Activated CD4-positive, alpha-beta T cell treated with anti-CD3 and anti-CD28 coated beads for 36 hours (primary cell): ENCODE measurements at regions of chr1 and their contacts with region 1.

Region 1: DNA sequence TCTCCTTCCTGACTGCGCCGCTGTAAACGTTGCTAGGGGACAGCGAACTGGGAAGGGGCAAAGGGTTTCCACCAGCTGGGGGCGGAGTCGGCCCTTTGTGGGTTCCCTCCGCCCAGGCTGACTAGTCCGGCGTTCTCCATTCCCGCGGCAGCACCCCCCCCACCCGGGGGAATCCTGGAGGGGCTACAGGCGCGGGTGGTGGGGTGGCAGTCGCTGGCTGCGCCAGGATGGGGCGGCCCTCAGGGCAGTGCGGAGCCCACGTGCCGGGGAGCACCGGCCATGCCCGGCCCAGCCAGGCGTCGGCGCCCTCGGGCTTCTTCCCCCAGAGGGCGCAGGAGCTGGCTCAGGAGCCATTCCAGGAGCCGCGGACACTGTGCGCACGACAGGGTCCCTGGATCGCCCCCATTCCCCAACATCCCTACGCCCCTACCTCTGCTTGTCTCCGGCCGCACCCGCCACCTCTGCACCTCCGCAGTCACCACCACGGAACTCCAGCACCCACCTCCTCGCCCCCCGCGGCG is 476 bp downstream of the BATF3 start:
- DNase-seq: peak; percentile 82
- ATAC-seq: peak; percentile 68
- H3K4me3 Mint-ChIP-seq: peak overlapping the region; percentile 77
- H3K27ac Mint-ChIP-seq: peak overlapping the region; percentile 88
- H3K4me1 Mint-ChIP-seq: peaks cover 57% of the 10 kb centered on the region
- H3K27me3 Mint-ChIP-seq: peaks cover 5% of the 10 kb centered on the region

Region 2: DNA sequence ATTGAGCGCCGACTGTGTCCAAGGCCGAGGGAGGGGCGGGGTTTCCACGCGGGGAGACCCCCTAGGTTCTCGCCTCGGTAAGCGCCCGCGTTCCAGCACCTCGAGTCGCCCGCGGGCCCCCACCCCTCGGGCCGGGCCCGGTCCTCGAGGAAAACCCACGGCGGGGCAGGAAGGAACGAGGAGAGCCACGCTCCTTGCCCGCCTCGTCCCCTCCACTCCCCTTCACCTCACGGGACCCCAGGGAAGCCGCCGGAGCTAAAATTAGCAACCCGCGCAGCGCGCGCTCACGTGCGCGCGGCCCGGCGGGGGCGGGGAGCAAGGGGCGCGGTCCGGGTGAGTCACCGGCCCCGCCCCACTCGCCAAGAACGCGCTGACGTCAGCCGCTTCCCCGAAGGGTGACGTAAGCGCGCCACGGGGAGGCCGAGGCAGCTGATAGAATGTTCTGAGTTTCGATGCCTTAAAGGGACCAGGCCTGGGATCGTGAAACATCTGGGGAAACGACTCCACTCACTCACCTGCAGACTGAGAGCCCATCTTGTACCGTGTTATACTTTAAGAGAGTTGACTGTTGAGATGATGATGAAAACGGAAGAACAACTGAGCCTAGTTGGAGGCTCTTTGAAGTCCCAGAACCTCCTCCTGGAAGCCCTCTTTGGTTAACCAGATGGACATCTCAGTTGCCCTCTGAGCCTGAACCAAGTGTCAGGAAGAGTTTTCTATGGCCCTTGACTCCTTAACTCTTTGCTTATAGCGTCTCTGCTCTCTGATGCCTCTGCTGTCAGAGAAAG is 140.3 kb before region 1 on chr1:
- CTCF ChIA-PET with region 1: no interaction called
- POLR2A ChIA-PET with region 1: no interaction called
- intact Hi-C with region 1: loop called in 1 of 2 experiments (anchors 2 kb)
- DNase-seq: peak; percentile 95
- ATAC-seq: peak; percentile 90
- H3K4me3 Mint-ChIP-seq: peak overlapping the region; percentile 61
- H3K27ac Mint-ChIP-seq: peak overlapping the region; percentile 95
- H3K4me1 Mint-ChIP-seq: peaks cover 19% of the 10 kb centered on the region
- H3K27me3 Mint-ChIP-seq: peaks cover 14% of the 10 kb centered on the region

Region 3: DNA sequence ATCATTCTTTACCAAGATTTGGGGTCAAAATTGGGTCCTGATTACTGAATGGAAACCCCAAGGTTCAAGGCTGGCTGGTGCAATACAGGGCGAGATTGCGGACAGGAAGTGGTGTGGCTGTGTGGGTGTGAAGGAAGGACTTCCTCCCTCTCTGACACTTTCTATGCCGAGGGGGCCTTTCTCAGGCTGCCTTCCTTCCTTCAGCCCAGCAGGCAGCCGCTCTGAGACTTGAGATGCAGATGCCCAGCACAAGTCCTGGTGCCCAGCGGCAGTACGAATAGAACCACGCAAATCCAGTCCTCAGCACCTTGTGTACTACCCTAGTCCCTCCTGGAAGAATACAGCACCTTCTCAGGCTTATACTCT is 15.8 kb before region 1 on chr1:
- CTCF ChIA-PET with region 1: interaction called, 11 read pairs
- POLR2A ChIA-PET with region 1: interaction called, 5 read pairs
- intact Hi-C with region 1: no loop called
- DNase-seq: peak; percentile 82
- ATAC-seq: peak; percentile 37
- H3K4me3 Mint-ChIP-seq: peak overlapping the region; percentile 39
- H3K27ac Mint-ChIP-seq: peak overlapping the region; percentile 83
- H3K4me1 Mint-ChIP-seq: peaks cover 50% of the 10 kb centered on the region
- H3K27me3 Mint-ChIP-seq: no peaks in the 10 kb centered on the region

Region 4: GRCh38 chr1:212738330-212738729 is 39.2 kb after region 1 on chr1:
- CTCF ChIA-PET with region 1: interaction called, 6 read pairs
- POLR2A ChIA-PET with region 1: no interaction called
- intact Hi-C with region 1: loop called in 1 of 2 experiments (anchors 5 kb)
- DNase-seq: no peak
- ATAC-seq: peak; percentile 81
- H3K4me3 Mint-ChIP-seq: no peak overlapping the region
- H3K27ac Mint-ChIP-seq: peak overlapping the region; percentile 85
- H3K4me1 Mint-ChIP-seq: peaks cover 36% of the 10 kb centered on the region
- H3K27me3 Mint-ChIP-seq: no peaks in the 10 kb centered on the region

Region 5: DNA sequence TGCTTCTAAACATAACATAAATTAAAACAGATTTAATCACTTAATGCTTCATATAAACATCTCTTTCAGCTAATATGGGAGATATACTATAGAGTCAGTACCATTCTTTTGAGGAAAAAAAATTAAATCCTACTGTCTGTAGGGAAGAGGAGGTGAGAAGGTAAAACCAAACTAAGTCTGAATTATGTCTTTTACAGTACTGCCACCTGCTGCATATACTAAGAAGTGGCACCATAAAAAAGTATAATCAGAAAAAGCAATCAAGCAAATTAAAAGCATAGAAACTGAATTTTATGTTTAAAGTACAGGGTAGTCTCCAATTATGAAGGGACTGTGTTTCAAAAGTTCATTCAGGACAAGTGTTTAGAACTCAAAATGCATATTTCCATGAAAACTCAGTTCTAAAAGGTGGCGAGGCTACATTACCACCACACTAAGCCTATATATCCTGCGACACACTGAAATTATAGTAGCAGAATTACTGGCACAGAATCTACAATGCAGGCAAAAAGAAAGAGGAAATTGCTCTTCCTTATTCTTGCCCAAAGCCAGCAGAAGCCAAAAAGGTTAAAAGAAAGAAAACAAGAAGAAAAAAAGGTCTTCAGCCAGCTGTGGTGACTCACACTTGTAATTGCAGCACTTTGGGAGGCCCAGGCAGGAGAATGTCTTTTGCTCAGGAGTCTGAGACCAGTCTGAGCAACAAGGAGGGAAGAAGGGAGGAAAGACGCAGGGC is 83.4 kb after region 1 on chr1:
- CTCF ChIA-PET with region 1: interaction called, 9 read pairs
- POLR2A ChIA-PET with region 1: no interaction called
- intact Hi-C with region 1: loop called (anchors 1 to 2 kb)
- DNase-seq: no peak
- ATAC-seq: peak; percentile 73
- H3K4me3 Mint-ChIP-seq: no peak overlapping the region
- H3K27ac Mint-ChIP-seq: no peak overlapping the region
- H3K4me1 Mint-ChIP-seq: peaks cover 27% of the 10 kb centered on the region
- H3K27me3 Mint-ChIP-seq: no peaks in the 10 kb centered on the region

Region 6: DNA sequence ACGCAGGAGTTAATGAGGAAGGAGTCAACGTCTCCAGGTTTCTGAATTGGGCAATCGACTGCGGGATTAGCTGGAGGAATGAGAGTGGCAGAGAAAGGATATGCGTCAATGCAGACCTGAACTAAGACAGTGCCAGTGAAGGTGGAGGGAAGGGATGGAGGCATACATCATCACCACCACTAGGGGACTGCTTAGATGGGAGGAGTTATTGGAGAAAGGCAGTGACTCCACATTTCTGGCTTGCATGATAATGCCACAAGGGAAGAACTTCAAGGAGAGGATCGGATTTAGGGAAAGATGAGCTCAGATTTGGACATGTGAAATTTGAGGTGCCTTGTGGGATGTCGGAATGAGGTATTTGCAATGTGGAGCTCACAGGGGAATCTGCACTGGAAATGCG is 268.6 kb after region 1 on chr1:
- CTCF ChIA-PET with region 1: no interaction called
- POLR2A ChIA-PET with region 1: no interaction called
- intact Hi-C with region 1: no loop called
- DNase-seq: peak; percentile 16
- ATAC-seq: peak; percentile 81
- H3K4me3 Mint-ChIP-seq: no peak overlapping the region
- H3K27ac Mint-ChIP-seq: no peak overlapping the region
- H3K4me1 Mint-ChIP-seq: peaks cover 1% of the 10 kb centered on the region
- H3K27me3 Mint-ChIP-seq: peaks cover 10% of the 10 kb centered on the region

Region 7: DNA sequence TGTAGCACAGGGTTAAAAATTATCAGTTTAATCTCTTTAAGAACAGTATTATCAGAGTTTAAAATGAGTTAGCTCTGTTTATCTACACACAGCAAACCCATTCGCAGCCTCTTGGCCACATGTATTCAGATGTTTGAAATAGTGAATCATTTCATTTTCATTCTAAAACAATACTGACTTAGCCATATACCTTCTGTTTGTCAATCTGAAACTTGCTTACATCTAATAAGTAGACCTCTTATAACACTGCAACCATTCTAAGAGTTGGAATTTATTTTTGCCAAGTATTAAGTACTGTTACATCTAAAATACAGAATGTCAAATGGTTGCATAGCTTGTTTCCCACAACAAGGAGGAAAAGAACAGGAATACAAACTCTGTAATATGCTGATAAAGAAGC is 291.1 kb after region 1 on chr1:
- CTCF ChIA-PET with region 1: no interaction called
- POLR2A ChIA-PET with region 1: no interaction called
- intact Hi-C with region 1: loop called (anchors 2 to 10 kb)
- DNase-seq: no peak
- ATAC-seq: no peak
- H3K4me3 Mint-ChIP-seq: no peak overlapping the region
- H3K27ac Mint-ChIP-seq: no peak overlapping the region
- H3K4me1 Mint-ChIP-seq: peaks cover 8% of the 10 kb centered on the region
- H3K27me3 Mint-ChIP-seq: no peaks in the 10 kb centered on the region